ENCODE measurements at regions of chr6 and their contacts with region 1.

Region 1: GRCh38 chr6:121334299-121335086 is at the start of gene TBC1D32:
- DNase-seq: peak; percentile 84 to 90 (median 89)
- ATAC-seq: peak; percentile 92
- H3K4me3 ChIP-seq: peak within 1 kb of the TSS; percentile 74
- H3K4me3 Mint-ChIP-seq: peak within 1 kb of the TSS; percentile 86 to 99 (median 98)
- H3K27ac ChIP-seq: peak within 1 kb of the TSS; percentile 97
- H3K27ac Mint-ChIP-seq: peak within 1 kb of the TSS; percentile 97 to 100 (median 99)
- H3K4me1 ChIP-seq: peaks cover 4 to 8% of the 10 kb centered on the region in 2 donors
- H3K4me1 Mint-ChIP-seq: peaks cover 16 to 45% (median 35%) of the 10 kb centered on the region in 7 donors
- H3K27me3 ChIP-seq: no peaks in the 10 kb centered on the region
- H3K27me3 Mint-ChIP-seq: peaks cover 0 to 11% (median 0%) of the 10 kb centered on the region in 5 donors
- total RNA-seq, gene TBC1D32: 12.5 to 17.7 (median 15.8) TPM

Region 2: DNA sequence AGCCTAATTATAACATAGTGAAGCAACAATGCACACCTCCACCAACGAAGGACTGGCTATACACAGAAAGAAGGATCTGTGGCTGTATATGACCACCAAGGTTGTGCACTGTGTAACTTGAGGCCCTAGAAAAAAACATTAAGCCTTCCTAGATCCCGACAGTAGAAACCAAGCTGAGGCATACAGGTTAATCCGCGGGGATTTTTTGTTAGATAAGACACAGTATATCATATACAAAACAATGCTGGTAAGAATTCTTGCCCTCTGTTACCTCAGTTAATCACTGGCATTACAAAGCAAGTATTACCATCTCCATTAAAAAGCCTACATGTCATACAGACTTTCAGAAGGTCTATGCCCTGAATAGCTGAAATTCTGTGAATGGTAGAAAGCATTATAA is 229.0 kb before region 1 on chr6:
- CTCF ChIA-PET with region 1: no interaction called
- POLR2A ChIA-PET with region 1: no interaction called
- intact Hi-C with region 1: no loop called
- DNase-seq: no peak
- ATAC-seq: no peak
- H3K4me3 ChIP-seq: no peak overlapping the region
- H3K4me3 Mint-ChIP-seq: no peak overlapping the region
- H3K27ac ChIP-seq: no peak overlapping the region
- H3K27ac Mint-ChIP-seq: no peak overlapping the region
- H3K4me1 ChIP-seq: no peaks in the 10 kb centered on the region
- H3K4me1 Mint-ChIP-seq: no peaks in the 10 kb centered on the region
- H3K27me3 ChIP-seq: no peaks in the 10 kb centered on the region
- H3K27me3 Mint-ChIP-seq: no peaks in the 10 kb centered on the region

Region 3: GRCh38 chr6:121319112-121319553 is 15.4 kb before region 1 on chr6:
- CTCF ChIA-PET with region 1: interaction called, 5 read pairs
- POLR2A ChIA-PET with region 1: interaction called, 9 read pairs
- intact Hi-C with region 1: loop called in 1 of 2 experiments (anchors 2 kb)
- DNase-seq: peak in 2 of 9 donors; percentile 4 to 17
- ATAC-seq: no peak
- H3K4me3 ChIP-seq: no peak overlapping the region
- H3K4me3 Mint-ChIP-seq: peak overlapping the region in 4 of 10 donors; percentile 46 to 62 (median 56)
- H3K27ac ChIP-seq: no peak overlapping the region
- H3K27ac Mint-ChIP-seq: no peak overlapping the region
- H3K4me1 ChIP-seq: no peaks in the 10 kb centered on the region
- H3K4me1 Mint-ChIP-seq: peaks cover 0 to 5% (median 0%) of the 10 kb centered on the region in 7 donors
- H3K27me3 ChIP-seq: no peaks in the 10 kb centered on the region
- H3K27me3 Mint-ChIP-seq: no peaks in the 10 kb centered on the region

Region 4: DNA sequence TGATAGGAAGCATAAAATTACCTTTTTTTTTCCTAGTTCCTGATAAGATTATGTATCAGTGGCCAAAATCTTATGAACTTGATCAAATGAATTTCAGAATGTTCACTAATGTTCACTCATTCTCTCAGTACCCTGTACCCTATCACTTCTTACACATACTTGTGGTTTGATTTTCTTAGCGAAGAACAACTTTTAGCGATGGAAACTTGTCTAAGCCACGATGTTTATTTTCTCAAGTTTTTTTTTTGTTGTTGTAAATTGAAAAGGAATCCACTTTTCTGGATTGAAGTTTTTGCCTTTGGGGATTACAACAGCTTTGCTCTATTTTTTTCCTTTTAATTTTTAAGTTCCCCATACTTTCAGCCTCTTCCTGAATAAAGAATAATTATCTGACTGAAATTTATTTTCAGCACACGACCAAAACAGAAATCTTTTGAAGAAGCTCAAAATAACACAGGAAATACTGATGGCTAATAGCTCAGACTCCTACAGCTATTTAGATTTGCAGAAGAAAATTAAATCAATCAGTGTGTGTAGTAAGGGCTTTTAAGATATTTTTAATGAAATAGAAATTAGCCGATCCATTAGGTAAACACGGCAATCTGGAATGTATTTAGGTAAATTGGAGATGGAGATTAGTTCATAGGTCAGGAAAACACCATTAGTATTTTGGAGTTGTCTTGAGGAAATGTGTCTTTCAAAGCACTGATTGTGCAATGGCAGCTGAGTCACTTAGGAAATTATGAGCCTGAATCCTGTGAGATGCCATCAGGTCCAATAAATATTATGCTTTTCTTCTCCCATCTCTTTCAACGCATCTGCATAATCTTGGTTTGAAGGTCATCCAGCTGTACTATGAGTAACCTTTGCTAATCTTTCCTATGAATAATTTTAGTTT is 318.5 kb after region 1 on chr6:
- CTCF ChIA-PET with region 1: no interaction called
- POLR2A ChIA-PET with region 1: no interaction called
- intact Hi-C with region 1: loop called in 1 of 2 experiments (anchors 5 kb)
- DNase-seq: no peak
- ATAC-seq: no peak
- H3K4me3 ChIP-seq: no peak overlapping the region
- H3K4me3 Mint-ChIP-seq: peak overlapping the region in 9 of 10 donors; percentile 10 to 80 (median 62)
- H3K27ac ChIP-seq: no peak overlapping the region
- H3K27ac Mint-ChIP-seq: peak overlapping the region in 8 of 9 donors; percentile 75 to 91 (median 84)
- H3K4me1 ChIP-seq: peaks cover 0 to 29% of the 10 kb centered on the region in 2 donors
- H3K4me1 Mint-ChIP-seq: peaks cover 15 to 61% (median 46%) of the 10 kb centered on the region in 7 donors
- H3K27me3 ChIP-seq: no peaks in the 10 kb centered on the region
- H3K27me3 Mint-ChIP-seq: no peaks in the 10 kb centered on the region

Region 5: DNA sequence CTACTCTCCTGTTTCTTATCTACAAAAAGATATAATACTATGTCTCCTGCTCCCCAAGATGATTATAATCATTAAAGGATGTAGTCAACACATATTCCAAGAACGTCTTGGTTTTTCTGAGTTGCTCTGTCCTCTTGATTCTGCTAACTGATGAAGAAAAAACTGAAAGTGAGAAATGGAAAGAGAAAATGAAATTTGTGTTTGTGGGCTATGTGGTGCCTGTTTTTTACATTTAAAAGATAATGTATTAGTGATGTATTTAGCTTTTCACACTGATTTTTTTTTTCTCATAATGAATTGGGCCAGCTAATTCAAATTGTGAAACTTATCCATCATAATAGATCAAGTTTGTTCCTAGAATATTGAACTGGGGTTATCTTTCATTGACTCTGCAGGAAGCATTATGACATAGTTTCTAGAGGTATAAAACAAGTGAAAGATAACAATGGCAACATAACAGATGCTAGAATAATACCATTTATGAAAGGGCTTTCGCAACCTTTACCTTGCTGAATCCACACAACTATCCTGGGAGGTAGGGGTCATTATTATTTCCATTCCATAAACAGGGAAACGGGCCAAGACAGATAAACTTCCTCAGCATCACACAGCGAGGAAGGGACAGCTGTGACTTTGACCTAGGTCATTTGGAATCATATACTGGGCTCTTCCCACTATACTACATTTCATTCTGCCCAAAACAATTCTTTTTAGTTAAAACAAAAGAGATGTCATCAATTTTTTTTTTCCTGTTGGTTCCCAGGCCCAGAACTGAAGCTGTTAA is 437.6 kb after region 1 on chr6:
- CTCF ChIA-PET with region 1: no interaction called
- POLR2A ChIA-PET with region 1: no interaction called
- intact Hi-C with region 1: loop called in 1 of 2 experiments (anchors 5 kb)
- DNase-seq: no peak
- ATAC-seq: no peak
- H3K4me3 ChIP-seq: no peak overlapping the region
- H3K4me3 Mint-ChIP-seq: peak overlapping the region in 1 of 10 donors; percentile 62
- H3K27ac ChIP-seq: no peak overlapping the region
- H3K27ac Mint-ChIP-seq: peak overlapping the region in 1 of 9 donors; percentile 81
- H3K4me1 ChIP-seq: no peaks in the 10 kb centered on the region
- H3K4me1 Mint-ChIP-seq: peaks cover 0 to 28% (median 0%) of the 10 kb centered on the region in 7 donors
- H3K27me3 ChIP-seq: no peaks in the 10 kb centered on the region
- H3K27me3 Mint-ChIP-seq: no peaks in the 10 kb centered on the region

Region 6: GRCh38 chr6:121965739-121966138 is 631.2 kb after region 1 on chr6:
- CTCF ChIA-PET with region 1: no interaction called
- POLR2A ChIA-PET with region 1: no interaction called
- intact Hi-C with region 1: loop called in 1 of 2 experiments (anchors 10 kb)
- DNase-seq: no peak
- ATAC-seq: no peak
- H3K4me3 ChIP-seq: no peak overlapping the region
- H3K4me3 Mint-ChIP-seq: no peak overlapping the region
- H3K27ac ChIP-seq: no peak overlapping the region
- H3K27ac Mint-ChIP-seq: no peak overlapping the region
- H3K4me1 ChIP-seq: no peaks in the 10 kb centered on the region
- H3K4me1 Mint-ChIP-seq: peaks cover 0 to 11% (median 7%) of the 10 kb centered on the region in 7 donors
- H3K27me3 ChIP-seq: no peaks in the 10 kb centered on the region
- H3K27me3 Mint-ChIP-seq: no peaks in the 10 kb centered on the region